PC-9 (cell line): ENCODE measurements at regions of chr2 and their contacts with region 1.

Region 1: DNA sequence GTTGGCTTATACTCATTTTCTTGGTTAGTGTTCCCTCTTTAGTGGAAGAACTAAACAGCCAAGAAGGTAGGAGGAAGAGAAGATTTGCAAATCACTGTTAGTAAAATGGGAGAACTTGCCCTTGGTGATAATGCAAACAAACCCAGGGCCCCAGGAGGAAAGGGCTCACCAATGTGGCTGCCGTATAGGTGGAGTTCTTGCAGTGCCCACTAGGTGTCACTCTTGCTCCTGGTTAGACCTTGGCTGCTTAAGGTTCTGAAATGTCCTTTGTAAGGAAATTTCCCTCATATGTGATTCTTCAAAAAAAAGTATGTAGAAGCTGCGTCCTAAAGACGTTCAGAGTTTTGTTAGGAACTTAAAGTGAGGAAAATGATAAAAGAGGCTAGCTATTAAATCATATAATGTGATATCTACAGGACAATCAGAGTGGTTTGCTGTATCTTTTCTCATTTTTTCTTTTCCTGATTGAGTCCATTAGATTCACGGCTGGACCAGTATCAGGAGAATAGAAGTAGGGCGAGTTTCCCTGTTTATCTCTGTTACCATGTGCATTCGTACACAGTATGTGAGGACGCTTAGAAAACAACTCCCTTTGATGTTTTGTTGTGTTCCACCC is 48.6 kb downstream of the RPIA start:
- DNase-seq: peak; percentile 39 to 65
- H3K4me3 ChIP-seq: no peak overlapping the region
- H3K27ac ChIP-seq: no peak overlapping the region
- H3K4me1 ChIP-seq: peaks cover 11% of the 10 kb centered on the region; the same call in 1 of the 2 replicates
- H3K27me3 ChIP-seq: no peaks in the 10 kb centered on the region
- CTCF ChIP-seq: peak; percentile 93

Region 2: GRCh38 chr2:88691339-88692183 is 48.5 kb before region 1 on chr2 and contains the start of gene RPIA:
- CTCF ChIA-PET with region 1: interaction called, 3 read pairs
- POLR2A ChIA-PET with region 1: no interaction called
- intact Hi-C with region 1: loop called (anchors 5 kb)
- DNase-seq: peak; percentile 96 to 97
- H3K4me3 ChIP-seq: peak within 1 kb of the TSS; percentile 84
- H3K27ac ChIP-seq: peak within 1 kb of the TSS; percentile 61
- H3K4me1 ChIP-seq: peaks cover 19% of the 10 kb centered on the region
- H3K27me3 ChIP-seq: no peaks in the 10 kb centered on the region
- CTCF ChIP-seq: peak; percentile 15; the same call in 1 of the 2 replicates
- total RNA-seq, gene RPIA: 20.5 and 21.3 TPM in 2 replicates

Region 3: GRCh38 chr2:88874063-88874657 is 134.1 kb after region 1 on chr2:
- CTCF ChIA-PET with region 1: no interaction called
- POLR2A ChIA-PET with region 1: no interaction called
- intact Hi-C with region 1: loop called (anchors 10 kb)
- DNase-seq: peak; percentile 23 to 61
- H3K4me3 ChIP-seq: no peak overlapping the region
- H3K27ac ChIP-seq: no peak overlapping the region
- H3K4me1 ChIP-seq: no peaks in the 10 kb centered on the region
- H3K27me3 ChIP-seq: peaks cover 14% of the 10 kb centered on the region; the same call in 1 of the 2 replicates
- CTCF ChIP-seq: peak; percentile 83